AG04450 (cell line): ENCODE measurements at regions of chr9 and their contacts with region 1.

Region 1: DNA sequence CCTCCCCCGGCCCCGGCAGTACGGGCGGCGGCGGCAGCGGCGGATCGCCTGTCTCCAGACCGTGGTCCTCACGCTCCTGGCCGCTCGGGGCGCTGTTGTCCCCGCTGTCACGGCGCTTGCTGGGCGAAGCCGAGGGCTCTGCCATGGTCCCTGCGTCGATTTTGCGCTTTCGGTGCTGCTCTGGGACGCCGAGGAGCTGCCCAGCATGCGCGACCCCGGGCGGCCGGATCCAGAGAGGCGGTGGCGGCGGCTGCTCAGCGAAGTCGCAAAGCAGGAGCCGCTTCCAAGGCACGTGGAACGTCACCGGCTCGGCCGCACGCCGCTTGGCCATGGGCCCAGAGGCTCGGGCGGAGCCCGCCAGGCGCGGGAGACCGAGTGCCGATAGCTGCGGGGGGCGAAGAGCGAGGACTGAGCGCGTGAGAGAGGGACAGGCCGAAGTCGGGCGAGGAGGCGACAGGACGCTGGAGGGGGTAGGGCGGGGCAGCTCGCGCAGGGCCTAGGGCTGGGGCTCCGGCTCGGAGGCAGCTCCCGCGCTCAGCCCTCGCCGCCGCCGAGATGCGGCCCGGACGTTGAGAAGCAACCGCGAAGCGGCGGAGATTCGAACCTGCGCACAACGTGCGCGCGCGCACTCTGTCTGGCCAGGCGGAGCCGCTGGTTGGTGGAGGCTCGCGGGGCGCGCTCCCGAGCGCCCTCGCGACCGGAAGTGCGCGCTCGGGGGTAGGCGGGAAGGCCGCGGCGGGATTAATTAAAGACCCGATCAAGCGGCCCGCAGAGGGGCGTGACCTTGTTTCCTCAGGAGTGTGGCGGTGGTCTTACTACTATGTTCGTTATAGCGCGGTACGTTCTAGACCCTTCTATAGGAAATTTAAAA is at the start of gene C9orf40:
- DNase-seq: peak; percentile 42
- H3K4me3 ChIP-seq: peak within 1 kb of the TSS; percentile 95
- H3K27ac ChIP-seq: peak within 1 kb of the TSS; percentile 67
- H3K27me3 ChIP-seq: no peaks in the 10 kb centered on the region
- CTCF ChIP-seq: peak; percentile 77
- polyA plus RNA-seq, gene C9orf40: 1.3 and 2.3 TPM in 2 replicates

Region 2: DNA sequence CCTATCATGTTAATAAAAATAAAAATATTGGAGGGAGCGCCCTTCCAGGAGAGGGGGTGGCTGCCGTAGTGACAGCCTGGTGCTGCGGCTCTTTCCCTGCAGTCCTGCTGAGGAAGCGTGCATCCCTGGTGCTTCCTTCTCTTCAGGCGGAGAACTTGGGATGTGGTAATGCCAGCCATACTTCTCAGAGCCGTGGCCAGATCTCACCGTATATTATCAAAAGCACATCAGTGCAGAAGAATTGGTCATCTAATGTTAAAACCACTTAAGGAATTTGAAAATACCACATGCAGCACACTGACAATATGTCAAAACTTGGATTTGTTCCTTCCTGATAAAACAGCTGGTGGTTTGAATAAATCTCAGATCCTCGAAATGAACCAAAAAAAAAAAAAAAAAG is 17.5 kb before region 1 on chr9:
- CTCF ChIA-PET with region 1: interaction called, 48 read pairs
- POLR2A ChIA-PET with region 1: no interaction called
- DNase-seq: no peak
- H3K4me3 ChIP-seq: no peak overlapping the region
- H3K27ac ChIP-seq: no peak overlapping the region
- H3K27me3 ChIP-seq: no peaks in the 10 kb centered on the region
- CTCF ChIP-seq: no peak

Region 3: DNA sequence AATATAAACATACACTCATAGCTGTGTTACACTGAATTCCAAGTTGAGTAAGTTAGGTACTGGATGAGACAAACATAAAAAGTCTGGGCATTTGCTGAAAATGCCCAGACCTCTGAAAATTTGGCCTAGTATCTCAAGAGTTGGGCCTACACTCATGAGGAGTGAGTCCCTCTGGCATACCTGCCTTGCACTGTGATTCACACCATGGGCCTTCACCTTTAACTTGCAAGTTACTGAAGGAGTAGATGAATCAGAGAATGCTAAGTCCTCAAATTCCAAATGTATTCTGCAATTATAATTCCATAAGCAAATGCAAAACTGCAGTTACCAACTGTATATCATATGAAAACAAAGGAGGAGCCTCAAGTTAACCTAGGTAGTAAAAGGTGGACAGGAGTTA is 32.5 kb after region 1 on chr9:
- CTCF ChIA-PET with region 1: interaction called, 11 read pairs
- POLR2A ChIA-PET with region 1: no interaction called
- DNase-seq: no peak
- H3K4me3 ChIP-seq: no peak overlapping the region
- H3K27ac ChIP-seq: no peak overlapping the region
- H3K27me3 ChIP-seq: no peaks in the 10 kb centered on the region
- CTCF ChIP-seq: no peak

Region 4: DNA sequence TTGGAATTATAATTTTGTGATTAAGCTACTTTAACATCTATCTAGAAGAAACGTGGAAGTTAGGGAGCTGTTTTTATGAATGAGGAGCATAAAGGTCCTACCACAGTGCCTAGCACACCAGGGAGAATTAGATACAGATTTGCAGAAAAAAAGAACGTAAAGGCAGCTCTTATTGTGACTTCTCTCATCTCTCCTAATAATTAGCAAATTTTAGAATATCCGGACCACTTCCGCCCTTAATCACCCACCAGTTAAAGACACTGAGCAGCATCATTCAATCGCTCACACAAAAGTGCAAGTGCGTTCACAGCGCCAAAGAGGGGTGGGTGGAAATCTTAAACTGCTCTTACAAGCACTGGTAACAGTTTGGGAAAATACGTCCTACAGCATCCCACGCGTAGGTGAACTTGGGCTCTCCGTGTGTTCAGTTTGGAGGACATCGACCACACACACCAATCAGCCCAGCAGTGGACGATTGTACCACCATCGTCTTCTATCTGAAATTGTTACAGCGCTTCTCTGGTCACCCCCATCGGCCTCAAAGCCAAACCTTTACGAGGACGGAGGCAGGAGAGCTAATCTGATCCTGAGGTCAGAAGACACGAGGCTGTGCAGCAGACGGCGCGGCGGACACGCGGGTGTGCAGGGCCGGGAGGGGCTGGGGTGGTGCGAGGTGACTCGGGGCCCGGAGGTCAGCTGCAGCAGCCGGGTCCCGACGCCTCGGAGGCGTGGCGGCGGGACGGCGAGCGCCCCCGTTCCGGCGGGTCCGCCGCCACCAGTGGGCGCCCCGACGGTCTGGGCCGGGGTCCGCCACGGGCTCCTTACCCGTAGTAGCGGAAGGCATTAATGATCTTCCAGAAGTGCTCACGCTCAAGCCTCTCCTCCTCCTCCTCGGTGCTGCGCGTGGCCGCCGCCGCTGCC is 74.9 kb after region 1 on chr9:
- CTCF ChIA-PET with region 1: interaction called, 17 read pairs
- POLR2A ChIA-PET with region 1: interaction called, 11 read pairs
- DNase-seq: no peak
- H3K4me3 ChIP-seq: peak overlapping the region; percentile 86
- H3K27ac ChIP-seq: peak overlapping the region; percentile 47
- H3K27me3 ChIP-seq: no peaks in the 10 kb centered on the region
- CTCF ChIP-seq: no peak

Region 5: DNA sequence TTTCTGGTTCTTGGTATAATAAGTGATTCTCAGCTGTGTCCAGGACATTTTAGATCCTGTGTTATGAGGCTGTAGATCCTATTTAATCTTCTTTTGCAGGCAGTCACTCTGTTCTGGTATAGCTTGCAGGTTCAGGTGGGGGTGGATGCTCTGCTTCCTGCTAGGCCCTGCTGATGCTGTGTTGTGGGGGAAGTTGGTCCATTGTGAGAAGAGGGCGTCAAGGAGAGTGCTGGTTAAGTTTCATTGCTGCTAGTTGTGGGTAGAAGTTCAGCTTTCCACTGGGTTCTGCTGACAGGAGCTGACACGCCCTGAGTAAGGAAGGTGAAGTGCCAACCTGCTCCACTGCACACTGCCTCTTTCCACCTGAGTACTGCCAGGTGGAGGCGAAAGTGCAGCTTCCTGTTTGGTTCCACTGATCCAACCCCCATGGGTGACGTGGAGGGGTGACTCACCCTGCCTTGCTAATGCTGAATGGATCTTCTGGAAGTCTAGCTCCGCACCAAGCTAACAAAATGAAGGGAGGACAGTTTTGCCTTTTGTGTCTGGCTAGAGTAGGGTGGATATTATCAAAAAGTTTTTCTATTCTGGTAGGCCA is 119.1 kb after region 1 on chr9:
- CTCF ChIA-PET with region 1: interaction called, 31 read pairs
- POLR2A ChIA-PET with region 1: no interaction called
- DNase-seq: no peak
- H3K4me3 ChIP-seq: no peak overlapping the region
- H3K27ac ChIP-seq: no peak overlapping the region
- H3K27me3 ChIP-seq: no peaks in the 10 kb centered on the region
- CTCF ChIP-seq: no peak

Region 6: DNA sequence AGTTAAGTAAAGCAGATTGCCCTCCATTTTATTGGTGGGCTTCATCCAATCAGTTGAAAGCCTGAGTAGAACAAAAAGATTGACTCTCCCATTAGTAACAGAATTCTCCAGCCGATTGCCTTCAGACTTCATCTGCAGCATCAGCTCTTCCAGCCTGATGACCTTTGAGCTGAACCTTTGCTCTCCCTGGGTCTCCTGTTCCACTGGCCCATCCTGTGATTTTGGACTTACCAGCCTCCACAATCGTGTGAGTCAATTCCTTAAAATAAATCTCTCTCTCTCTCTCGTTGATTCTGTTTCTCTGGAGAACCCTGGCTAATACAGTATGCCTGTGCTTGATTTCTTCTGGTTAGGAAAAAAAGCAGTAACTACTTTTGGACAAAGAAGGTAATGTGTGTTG is 257.7 kb after region 1 on chr9:
- CTCF ChIA-PET with region 1: no interaction called
- POLR2A ChIA-PET with region 1: no interaction called
- DNase-seq: no peak
- H3K4me3 ChIP-seq: no peak overlapping the region
- H3K27ac ChIP-seq: no peak overlapping the region
- H3K27me3 ChIP-seq: no peaks in the 10 kb centered on the region
- CTCF ChIP-seq: no peak